Psoas muscle (tissue), 8 donors: ENCODE measurements at regions of chr1 and their contacts with region 1.

Region 1: GRCh38 chr1:160951443-160952128 is 3.0 kb downstream of the ITLN2 start:
- DNase-seq: peak; percentile 29 to 58
- ATAC-seq: no peak
- H3K4me3 ChIP-seq: no peak overlapping the region
- H3K27ac ChIP-seq: no peak overlapping the region
- H3K4me1 ChIP-seq: no peaks in the 10 kb centered on the region
- H3K27me3 ChIP-seq: peaks cover 0 to 16% (median under 1%) of the 10 kb centered on the region in 3 donors
- CTCF ChIP-seq: peak; percentile 29

Region 2: GRCh38 chr1:160830321-160831153 is 121.0 kb before region 1 on chr1:
- intact Hi-C with region 1: loop called in 1 of 2 experiments (anchors 10 kb)
- DNase-seq: peak in 1 of 2 donors; percentile 64
- ATAC-seq: no peak
- H3K4me3 ChIP-seq: no peak overlapping the region
- H3K27ac ChIP-seq: no peak overlapping the region
- H3K4me1 ChIP-seq: no peaks in the 10 kb centered on the region
- H3K27me3 ChIP-seq: no peaks in the 10 kb centered on the region
- CTCF ChIP-seq: peak; percentile 14

Region 3: DNA sequence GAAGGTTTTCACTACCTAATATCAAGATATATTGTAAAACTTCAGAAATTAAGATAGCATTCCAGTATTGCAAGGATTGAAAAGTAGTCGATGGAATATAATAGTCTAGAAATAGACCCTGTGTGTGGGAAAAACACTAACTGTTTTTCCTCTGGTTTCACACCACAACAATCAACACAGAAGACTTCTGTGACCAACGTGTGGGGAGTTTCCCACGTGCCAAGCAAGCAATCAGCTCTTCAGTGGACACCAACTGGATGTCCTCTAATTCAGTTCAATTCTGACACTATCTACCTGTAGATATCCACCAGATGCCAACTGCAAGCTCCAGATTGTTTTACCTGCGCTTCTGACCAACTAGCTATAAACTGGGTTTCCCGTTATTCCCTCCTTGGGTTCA is 101.0 kb before region 1 on chr1:
- intact Hi-C with region 1: no loop called
- DNase-seq: no peak
- ATAC-seq: no peak
- H3K4me3 ChIP-seq: no peak overlapping the region
- H3K27ac ChIP-seq: no peak overlapping the region
- H3K4me1 ChIP-seq: no peaks in the 10 kb centered on the region
- H3K27me3 ChIP-seq: no peaks in the 10 kb centered on the region
- CTCF ChIP-seq: no peak